ENCODE measurements at regions of chr10 and their contacts with region 1.

Region 1: GRCh38 chr10:110803830-110804338 is 67.8 kb upstream of the PDCD4 start:
- DNase-seq: peak in 3 of 5 donors; percentile 20 to 35 (median 31)
- H3K4me3 ChIP-seq: peak overlapping the region in 1 of 2 donors; percentile 4
- H3K4me3 Mint-ChIP-seq: peak overlapping the region in 7 of 8 donors; percentile 51 to 81 (median 70)
- H3K27ac ChIP-seq: peak overlapping the region; percentile 10
- H3K27ac Mint-ChIP-seq: peak overlapping the region; percentile 78 to 98 (median 91)
- H3K4me1 ChIP-seq: peaks cover 36% of the 10 kb centered on the region
- H3K4me1 Mint-ChIP-seq: peaks cover 30 to 57% (median 45%) of the 10 kb centered on the region in 4 donors
- H3K27me3 ChIP-seq: no peaks in the 10 kb centered on the region
- H3K27me3 Mint-ChIP-seq: no peaks in the 10 kb centered on the region

Region 2: GRCh38 chr10:110818311-110819245 is 14.7 kb after region 1 on chr10:
- CTCF ChIA-PET with region 1: interaction called, 3 read pairs
- POLR2A ChIA-PET with region 1: interaction called, 14 read pairs
- intact Hi-C with region 1: no loop called
- DNase-seq: no peak
- H3K4me3 ChIP-seq: no peak overlapping the region
- H3K4me3 Mint-ChIP-seq: no peak overlapping the region
- H3K27ac ChIP-seq: no peak overlapping the region
- H3K27ac Mint-ChIP-seq: peak overlapping the region in 3 of 7 donors; percentile 18 to 37 (median 30)
- H3K4me1 ChIP-seq: no peaks in the 10 kb centered on the region
- H3K4me1 Mint-ChIP-seq: peaks cover 8 to 38% (median 21%) of the 10 kb centered on the region in 4 donors
- H3K27me3 ChIP-seq: no peaks in the 10 kb centered on the region
- H3K27me3 Mint-ChIP-seq: no peaks in the 10 kb centered on the region

Region 3: GRCh38 chr10:110843031-110843430 is 39.1 kb after region 1 on chr10:
- CTCF ChIA-PET with region 1: interaction called, 19 read pairs
- POLR2A ChIA-PET with region 1: interaction called, 11 read pairs
- intact Hi-C with region 1: no loop called
- DNase-seq: peak; percentile 44 to 78 (median 59)
- H3K4me3 ChIP-seq: no peak overlapping the region
- H3K4me3 Mint-ChIP-seq: peak overlapping the region; percentile 7 to 83 (median 34)
- H3K27ac ChIP-seq: peak overlapping the region; percentile 5
- H3K27ac Mint-ChIP-seq: peak overlapping the region; percentile 54 to 95 (median 85)
- H3K4me1 ChIP-seq: peaks cover 35% of the 10 kb centered on the region
- H3K4me1 Mint-ChIP-seq: peaks cover 28 to 62% (median 46%) of the 10 kb centered on the region in 4 donors
- H3K27me3 ChIP-seq: no peaks in the 10 kb centered on the region
- H3K27me3 Mint-ChIP-seq: no peaks in the 10 kb centered on the region

Region 4: GRCh38 chr10:110864662-110865140 is 60.8 kb after region 1 on chr10:
- CTCF ChIA-PET with region 1: interaction called, 59 read pairs
- POLR2A ChIA-PET with region 1: interaction called, 91 read pairs
- intact Hi-C with region 1: loop called (anchors 2 kb)
- DNase-seq: peak; percentile 85 to 91 (median 87)
- H3K4me3 ChIP-seq: peak overlapping the region in 1 of 2 donors; percentile 31
- H3K4me3 Mint-ChIP-seq: peak overlapping the region; percentile 81 to 93 (median 86)
- H3K27ac ChIP-seq: peak overlapping the region; percentile 98
- H3K27ac Mint-ChIP-seq: peak overlapping the region; percentile 91 to 100 (median 99)
- H3K4me1 ChIP-seq: peaks cover 99% of the 10 kb centered on the region
- H3K4me1 Mint-ChIP-seq: peaks cover 78 to 100% (median 93%) of the 10 kb centered on the region in 4 donors
- H3K27me3 ChIP-seq: no peaks in the 10 kb centered on the region
- H3K27me3 Mint-ChIP-seq: no peaks in the 10 kb centered on the region

Region 5: DNA sequence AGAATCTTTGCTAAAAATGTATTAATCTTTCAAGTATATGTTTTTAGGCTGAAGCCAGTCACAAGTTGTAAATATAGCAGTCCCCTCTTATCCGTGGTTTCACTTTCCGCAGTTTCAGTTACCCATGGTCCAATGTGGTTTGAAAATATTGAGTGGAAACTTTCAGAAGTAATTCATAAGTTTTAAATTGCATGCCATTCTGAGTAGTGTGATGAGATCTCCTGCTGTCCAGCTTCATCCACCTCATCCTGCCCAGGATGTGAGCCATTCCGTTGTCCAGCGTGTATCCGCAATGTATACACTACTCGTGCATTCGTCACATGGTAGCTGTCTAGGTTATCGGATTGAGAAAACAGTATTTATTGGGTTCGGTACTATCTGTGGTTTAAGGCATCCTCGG is 80.0 kb after region 1 on chr10:
- CTCF ChIA-PET with region 1: interaction called, 72 read pairs
- POLR2A ChIA-PET with region 1: interaction called, 24 read pairs
- intact Hi-C with region 1: no loop called
- DNase-seq: no peak
- H3K4me3 ChIP-seq: no peak overlapping the region
- H3K4me3 Mint-ChIP-seq: peak overlapping the region; percentile 54 to 83 (median 80)
- H3K27ac ChIP-seq: no peak overlapping the region
- H3K27ac Mint-ChIP-seq: peak overlapping the region; percentile 65 to 94 (median 80)
- H3K4me1 ChIP-seq: peaks cover 81% of the 10 kb centered on the region
- H3K4me1 Mint-ChIP-seq: peaks cover 52 to 83% (median 68%) of the 10 kb centered on the region in 4 donors
- H3K27me3 ChIP-seq: no peaks in the 10 kb centered on the region
- H3K27me3 Mint-ChIP-seq: no peaks in the 10 kb centered on the region

Region 6: DNA sequence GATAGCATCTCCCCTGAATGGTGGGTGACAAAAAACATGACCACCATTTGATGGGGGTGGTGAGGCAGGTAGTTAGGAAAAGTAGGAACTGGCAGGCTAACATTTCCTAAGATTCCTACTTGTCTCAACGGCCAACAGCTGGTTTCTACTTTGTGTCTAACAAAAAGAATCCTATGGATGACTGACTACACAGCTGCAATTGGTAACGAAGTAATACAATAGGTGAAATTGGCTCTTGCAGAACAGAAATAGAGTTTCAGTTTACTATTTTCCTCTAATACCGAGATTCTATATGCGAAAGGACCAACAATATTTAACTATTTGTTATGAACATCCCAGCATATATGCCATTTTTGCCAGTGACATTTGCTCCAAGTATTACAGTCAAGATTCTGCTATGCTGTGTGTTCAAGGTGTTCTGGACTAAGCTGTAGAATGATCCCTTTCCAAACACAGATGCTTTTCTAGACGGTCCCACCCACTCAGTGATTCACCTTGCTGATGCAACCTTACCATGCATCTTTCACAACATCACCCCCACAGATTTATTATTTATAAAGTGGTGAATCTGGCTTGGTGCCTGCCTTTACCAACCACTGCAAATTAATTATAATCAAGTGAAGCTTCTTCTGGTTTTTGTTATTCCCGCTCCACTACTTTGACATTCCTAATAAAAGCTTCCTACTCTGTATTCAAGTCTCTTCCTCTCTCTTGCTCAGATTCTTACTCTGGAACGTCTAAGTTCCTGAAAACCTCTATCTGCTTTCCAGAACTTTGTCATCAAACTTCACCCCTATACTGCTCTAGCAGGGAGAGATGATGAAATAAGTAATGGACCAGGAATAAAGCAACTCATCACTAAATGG is 98.3 kb after region 1 on chr10:
- CTCF ChIA-PET with region 1: interaction called, 25 read pairs
- POLR2A ChIA-PET with region 1: interaction called, 9 read pairs
- intact Hi-C with region 1: no loop called
- DNase-seq: no peak
- H3K4me3 ChIP-seq: no peak overlapping the region
- H3K4me3 Mint-ChIP-seq: no peak overlapping the region
- H3K27ac ChIP-seq: no peak overlapping the region
- H3K27ac Mint-ChIP-seq: peak overlapping the region in 6 of 7 donors; percentile 55 to 88 (median 68)
- H3K4me1 ChIP-seq: peaks cover under 1% of the 10 kb centered on the region
- H3K4me1 Mint-ChIP-seq: peaks cover 11 to 33% (median 24%) of the 10 kb centered on the region in 4 donors
- H3K27me3 ChIP-seq: no peaks in the 10 kb centered on the region
- H3K27me3 Mint-ChIP-seq: no peaks in the 10 kb centered on the region